Panc1 (cell line): ENCODE measurements at regions of chrX and their contacts with region 1.

Region 1: GRCh38 chrX:112306027-112306426 is 223.5 kb upstream of the TRPC5 start:
- DNase-seq: no peak
- ATAC-seq: no peak
- H3K4me3 ChIP-seq: no peak overlapping the region
- H3K27ac ChIP-seq: no peak overlapping the region
- H3K4me1 ChIP-seq: no peaks in the 10 kb centered on the region
- H3K27me3 ChIP-seq: no peaks in the 10 kb centered on the region
- CTCF ChIP-seq: no peak

Region 2: DNA sequence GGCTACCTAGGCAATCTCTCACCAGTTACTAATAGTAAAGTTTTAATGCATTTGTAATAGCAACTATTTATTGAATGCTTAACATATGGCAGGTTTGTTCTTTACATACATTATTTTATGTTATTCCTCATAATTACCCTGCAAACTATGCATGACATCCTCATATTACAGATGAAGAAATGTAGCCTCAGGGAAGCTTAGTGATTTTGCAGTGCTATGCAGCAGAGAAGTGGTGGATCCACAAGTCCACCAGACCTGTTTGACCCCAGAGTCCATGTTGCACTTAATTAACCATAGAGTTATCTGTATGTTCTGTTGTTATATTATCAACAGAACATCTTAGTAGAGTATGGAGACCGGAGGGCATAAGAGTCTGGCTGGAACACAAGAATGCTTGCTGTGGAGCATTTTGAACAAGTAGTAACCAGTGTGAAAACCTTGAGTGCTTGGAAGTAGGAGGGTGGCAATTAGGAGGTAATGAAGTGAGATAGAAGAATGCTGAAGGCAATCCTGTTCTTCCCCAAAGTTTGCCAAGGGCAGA is 302.0 kb before region 1 on chrX:
- CTCF ChIA-PET with region 1: no interaction called
- POLR2A ChIA-PET with region 1: interaction called, 12 read pairs
- in situ Hi-C with region 1: no loop called
- intact Hi-C with region 1: no loop called
- DNase-seq: no peak
- ATAC-seq: no peak
- H3K4me3 ChIP-seq: no peak overlapping the region
- H3K27ac ChIP-seq: no peak overlapping the region
- H3K4me1 ChIP-seq: no peaks in the 10 kb centered on the region
- H3K27me3 ChIP-seq: no peaks in the 10 kb centered on the region
- CTCF ChIP-seq: no peak

Region 3: GRCh38 chrX:113529426-113530013 is 1223.5 kb after region 1 on chrX:
- CTCF ChIA-PET with region 1: no interaction called
- POLR2A ChIA-PET with region 1: no interaction called
- in situ Hi-C with region 1: no loop called
- intact Hi-C with region 1: no loop called
- DNase-seq: no peak
- ATAC-seq: no peak
- H3K4me3 ChIP-seq: no peak overlapping the region
- H3K27ac ChIP-seq: no peak overlapping the region
- H3K4me1 ChIP-seq: no peaks in the 10 kb centered on the region
- H3K27me3 ChIP-seq: no peaks in the 10 kb centered on the region
- CTCF ChIP-seq: no peak